IMR-90 (cell line): ENCODE measurements at regions of chrX and their contacts with region 1.

Region 1: GRCh38 chrX:16719334-16720084 is at the start of gene SYAP1:
- DNase-seq: peak; percentile 99
- ATAC-seq: peak; percentile 95
- H3K4me3 ChIP-seq: peak within 1 kb of the TSS; percentile 70
- H3K27ac ChIP-seq: peak within 1 kb of the TSS; percentile 82
- H3K4me1 ChIP-seq: peaks cover 4% of the 10 kb centered on the region; the same call in 1 of the 2 replicates
- H3K27me3 ChIP-seq: no peaks in the 10 kb centered on the region
- CTCF ChIP-seq: no peak
- POLR2A ChIP-seq: peak; percentile 99
- RAD21 ChIP-seq: no peak
- total RNA-seq, gene SYAP1: 35.0 and 55.0 TPM in 2 replicates

Region 2: DNA sequence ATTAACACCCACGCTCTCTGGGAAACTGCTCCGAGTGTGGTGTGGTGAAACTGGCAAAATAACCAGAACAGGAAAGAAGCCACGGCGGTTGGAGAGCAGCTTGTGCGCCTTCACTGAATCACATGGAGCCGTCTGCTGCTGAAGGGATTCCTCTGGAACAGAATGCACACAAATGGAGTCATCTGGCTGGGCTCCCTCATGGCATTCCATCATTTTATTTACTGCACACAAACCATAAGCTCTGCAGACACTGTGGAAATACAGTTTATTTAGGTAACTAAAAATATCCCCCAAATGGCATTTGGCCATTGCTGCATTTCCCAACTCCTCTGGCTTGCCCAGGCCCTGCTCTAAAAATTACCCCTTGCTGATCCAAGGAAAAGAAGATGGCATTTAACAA is 256.6 kb before region 1 on chrX:
- CTCF ChIA-PET with region 1: no interaction called
- POLR2A ChIA-PET with region 1: no interaction called
- dilution Hi-C with region 1: no loop called
- in situ Hi-C with region 1: no loop called
- intact Hi-C with region 1: no loop called
- DNase-seq: peak; percentile 94
- ATAC-seq: peak; percentile 84
- H3K4me3 ChIP-seq: no peak overlapping the region
- H3K27ac ChIP-seq: no peak overlapping the region; the same call in 1 of the 2 replicates
- H3K4me1 ChIP-seq: peaks cover 11% of the 10 kb centered on the region
- H3K27me3 ChIP-seq: no peaks in the 10 kb centered on the region
- CTCF ChIP-seq: no peak
- POLR2A ChIP-seq: no peak
- RAD21 ChIP-seq: no peak

Region 3: DNA sequence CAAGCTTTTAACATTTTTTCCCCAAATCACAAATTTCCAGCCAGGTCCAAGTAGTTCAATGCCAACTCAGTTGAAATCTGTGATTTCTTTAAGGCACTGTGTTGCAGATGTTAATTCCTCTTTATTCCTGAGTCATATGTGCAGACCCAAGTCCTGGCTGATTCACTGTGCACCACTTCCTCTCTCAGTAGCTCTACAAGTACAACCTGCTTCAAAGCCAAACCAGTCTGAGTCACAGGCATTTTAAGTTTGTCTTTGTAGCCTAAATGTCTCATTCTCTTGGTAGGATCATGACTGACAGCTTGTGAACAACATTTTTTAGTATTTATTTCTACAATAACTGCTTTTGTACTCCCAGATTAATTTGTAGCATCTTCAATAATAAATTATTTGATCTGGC is 235.2 kb before region 1 on chrX:
- CTCF ChIA-PET with region 1: no interaction called
- POLR2A ChIA-PET with region 1: no interaction called
- dilution Hi-C with region 1: no loop called
- in situ Hi-C with region 1: no loop called
- intact Hi-C with region 1: no loop called
- DNase-seq: peak; percentile 97
- ATAC-seq: peak; percentile 91
- H3K4me3 ChIP-seq: no peak overlapping the region
- H3K27ac ChIP-seq: no peak overlapping the region
- H3K4me1 ChIP-seq: peaks cover 4% of the 10 kb centered on the region; the same call in 1 of the 2 replicates
- H3K27me3 ChIP-seq: no peaks in the 10 kb centered on the region
- CTCF ChIP-seq: no peak
- POLR2A ChIP-seq: no peak
- RAD21 ChIP-seq: no peak

Region 4: GRCh38 chrX:16678689-16679088 is 40.8 kb before region 1 on chrX:
- CTCF ChIA-PET with region 1: no interaction called
- POLR2A ChIA-PET with region 1: no interaction called
- dilution Hi-C with region 1: no loop called
- in situ Hi-C with region 1: no loop called
- intact Hi-C with region 1: no loop called
- DNase-seq: no peak
- ATAC-seq: no peak
- H3K4me3 ChIP-seq: no peak overlapping the region
- H3K27ac ChIP-seq: no peak overlapping the region
- H3K4me1 ChIP-seq: no peaks in the 10 kb centered on the region
- H3K27me3 ChIP-seq: peaks cover 3% of the 10 kb centered on the region; the same call in 1 of the 2 replicates
- CTCF ChIP-seq: no peak
- POLR2A ChIP-seq: no peak
- RAD21 ChIP-seq: no peak

Region 5: GRCh38 chrX:16786139-16786790 is 66.8 kb after region 1 on chrX and contains the start of gene TXLNG:
- CTCF ChIA-PET with region 1: no interaction called
- POLR2A ChIA-PET with region 1: no interaction called
- dilution Hi-C with region 1: no loop called
- in situ Hi-C with region 1: no loop called
- intact Hi-C with region 1: loop called (anchors 1 kb)
- DNase-seq: peak; percentile 100
- ATAC-seq: peak; percentile 99
- H3K4me3 ChIP-seq: peak within 1 kb of the TSS; percentile 83
- H3K27ac ChIP-seq: peak within 1 kb of the TSS; percentile 67
- H3K4me1 ChIP-seq: no peaks in the 10 kb centered on the region
- H3K27me3 ChIP-seq: no peaks in the 10 kb centered on the region; the same call in 1 of the 2 replicates
- CTCF ChIP-seq: no peak
- POLR2A ChIP-seq: peak; percentile 95
- RAD21 ChIP-seq: no peak
- total RNA-seq, gene TXLNG: 7.0 and 11.1 TPM in 2 replicates